Ovary (tissue), 10 donors: ENCODE measurements at regions of chr1 and their contacts with region 1.

Region 1: GRCh38 chr1:229558571-229559335 is at the start of gene ABCB10:
- DNase-seq: peak; percentile 94 to 97 (median 95)
- H3K4me3 ChIP-seq: peak within 1 kb of the TSS; percentile 90
- H3K27ac ChIP-seq: peak within 1 kb of the TSS; percentile 66 to 94
- H3K4me1 ChIP-seq: peaks cover 6% of the 10 kb centered on the region
- H3K27me3 ChIP-seq: no peaks in the 10 kb centered on the region
- CTCF ChIP-seq: peak; percentile 67 to 93 (median 89)
- EP300 ChIP-seq: no peak
- POLR2A ChIP-seq: peak; percentile 39
- total RNA-seq, gene ABCB10: 7.6 to 15.4 (median 10.3) TPM

Region 2: DNA sequence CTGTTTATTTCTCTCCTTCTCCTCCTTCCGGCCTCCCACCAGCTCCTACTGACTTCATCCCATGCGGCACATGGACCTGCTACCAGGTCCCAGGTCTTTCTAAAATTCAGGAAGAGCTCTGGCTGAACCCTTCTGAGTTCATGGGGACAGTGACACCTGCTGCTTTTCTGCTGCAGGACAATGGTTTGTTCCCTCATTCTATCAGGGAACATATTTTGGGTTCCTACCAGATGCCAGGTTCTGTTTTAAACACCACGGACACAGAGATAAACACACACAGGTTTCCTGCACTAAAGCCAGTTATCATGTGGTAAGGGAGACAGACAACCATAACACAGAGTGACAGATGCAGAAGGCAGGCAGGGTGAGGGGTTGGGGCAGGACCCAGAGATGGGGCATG is 401.9 kb before region 1 on chr1:
- intact Hi-C with region 1: no loop called
- DNase-seq: no peak
- H3K4me3 ChIP-seq: no peak overlapping the region
- H3K27ac ChIP-seq: no peak overlapping the region
- H3K4me1 ChIP-seq: no peaks in the 10 kb centered on the region
- H3K27me3 ChIP-seq: no peaks in the 10 kb centered on the region
- CTCF ChIP-seq: no peak
- EP300 ChIP-seq: no peak
- POLR2A ChIP-seq: no peak

Region 3: GRCh38 chr1:229625915-229626831 is 67.4 kb after region 1 on chr1 and contains the starts of genes TAF5L and URB2:
- intact Hi-C with region 1: loop called in 3 of 4 experiments (anchors 5 to 10 kb)
- DNase-seq: peak; percentile 84 to 90 (median 85)
- H3K4me3 ChIP-seq: peak within 1 kb of the TSS; percentile 71
- H3K27ac ChIP-seq: peak within 1 kb of the TSS; percentile 91 to 95
- H3K4me1 ChIP-seq: peaks cover 10% of the 10 kb centered on the region
- H3K27me3 ChIP-seq: no peaks in the 10 kb centered on the region
- CTCF ChIP-seq: peak in 2 of 3 donors; percentile 15 to 33
- EP300 ChIP-seq: no peak
- POLR2A ChIP-seq: no peak
- total RNA-seq, gene TAF5L: 7.6 to 19.8 (median 12.5) TPM
- total RNA-seq, gene URB2: 4.5 to 16.7 (median 11.2) TPM